ENCODE measurements at regions of chr4 and their contacts with region 1.

Region 1: GRCh38 chr4:47499700-47500099 is 14.6 kb downstream of the ATP10D start:
- DNase-seq: no peak
- H3K4me3 ChIP-seq: no peak overlapping the region
- CTCF ChIP-seq: no peak
- POLR2A ChIP-seq: no peak

Region 2: DNA sequence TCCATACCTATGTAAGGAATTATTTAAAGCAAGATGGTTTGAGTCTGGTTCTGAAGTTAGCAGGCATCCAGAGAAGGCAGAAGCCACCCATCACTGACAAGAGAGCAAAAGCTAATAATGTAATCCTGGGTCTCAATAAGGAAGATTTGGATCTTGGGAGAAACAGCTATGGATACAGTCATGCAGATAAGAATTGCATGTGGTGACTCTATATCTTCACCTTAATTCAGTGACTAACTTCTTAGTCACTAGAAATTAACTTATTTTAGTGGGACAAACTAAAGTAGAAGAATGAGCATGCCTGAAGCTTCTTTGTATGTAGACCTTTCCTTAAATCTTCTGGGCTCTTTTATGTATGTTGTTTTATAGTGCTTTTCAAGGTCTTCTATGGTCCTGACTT is 52.0 kb after region 1 on chr4:
- intact Hi-C with region 1: loop called (anchors 10 kb)
- DNase-seq: no peak
- H3K4me3 ChIP-seq: no peak overlapping the region
- CTCF ChIP-seq: no peak
- POLR2A ChIP-seq: no peak

Region 3: DNA sequence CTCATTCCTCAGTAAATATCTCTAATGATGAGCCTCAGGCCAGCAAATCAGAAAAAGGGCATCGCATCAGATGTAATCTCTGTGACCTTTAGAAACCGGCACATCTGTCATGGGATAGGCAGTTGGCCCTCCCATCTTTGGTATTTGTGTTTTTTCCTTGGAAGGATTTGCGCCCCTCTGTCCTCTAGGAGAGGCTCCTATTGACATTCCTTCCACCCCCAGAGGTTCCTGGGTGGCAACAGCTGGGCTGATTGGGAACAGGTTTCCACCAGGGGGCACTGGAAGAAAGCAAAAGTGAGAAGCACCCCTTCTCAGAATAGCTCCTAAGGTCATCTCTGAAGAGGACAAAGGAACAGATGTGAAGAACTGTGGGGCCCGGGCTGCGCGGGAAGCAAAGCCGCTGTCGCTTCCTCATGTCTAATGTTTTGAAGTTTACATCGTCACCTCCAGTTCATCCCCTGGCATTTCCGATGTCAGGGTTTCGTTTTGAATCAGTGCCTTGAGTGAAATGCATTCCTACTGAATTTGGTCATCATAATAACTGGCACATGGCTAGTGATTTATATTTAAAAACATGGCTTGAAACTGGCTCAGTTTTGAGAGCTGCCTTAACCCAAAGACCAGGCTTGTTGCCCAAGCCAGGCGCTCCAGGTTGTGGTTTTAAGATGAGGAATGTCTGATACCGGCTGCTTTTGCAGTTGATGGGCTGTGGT is 628.1 kb after region 1 on chr4:
- intact Hi-C with region 1: no loop called
- DNase-seq: peak; percentile 31 to 86
- H3K4me3 ChIP-seq: no peak overlapping the region
- CTCF ChIP-seq: no peak
- POLR2A ChIP-seq: no peak